GM12878 (cell line): ENCODE measurements at regions of chr1 and their contacts with region 1.

Region 1: DNA sequence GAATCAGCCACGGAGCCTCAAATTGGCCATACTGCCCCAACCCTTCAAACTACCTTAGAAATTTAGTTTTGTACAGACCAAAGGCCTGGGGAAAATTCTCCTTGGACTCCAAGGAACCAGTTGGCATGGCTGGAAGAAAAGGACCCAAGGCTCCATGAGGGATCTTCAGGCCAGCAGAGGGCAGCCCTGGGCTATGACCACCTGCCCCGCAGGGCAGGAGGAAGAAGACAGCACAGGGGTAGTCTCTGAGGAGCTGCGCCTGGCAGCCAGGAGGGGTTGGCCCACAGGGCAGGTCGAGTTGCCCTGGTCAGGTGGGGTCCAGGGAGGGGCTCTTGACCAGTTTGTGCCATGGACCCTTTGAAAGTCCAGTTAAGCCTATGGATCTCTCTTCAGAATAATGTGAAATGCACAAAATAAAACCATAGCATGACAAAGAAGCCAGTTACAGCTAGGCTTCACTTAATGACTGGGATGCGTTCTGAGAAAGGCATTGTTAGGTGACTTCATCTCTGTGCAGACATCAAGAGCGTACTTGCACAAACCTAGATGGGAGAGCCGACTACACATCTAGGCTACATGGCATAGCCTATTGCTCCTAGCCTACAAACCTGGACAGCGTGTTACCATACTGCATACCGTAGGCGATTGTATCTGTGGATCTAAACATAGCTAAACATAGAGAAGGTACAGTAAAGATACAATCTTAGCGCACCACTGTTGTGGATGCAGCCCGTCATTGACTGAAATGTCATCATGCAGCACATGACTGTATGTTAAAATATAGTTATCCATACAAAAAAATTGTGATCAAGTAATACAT is 26.1 kb downstream of the CACNA1S start:
- DNase-seq: no peak
- ATAC-seq: peak; percentile 96
- H3K4me3 ChIP-seq: no peak overlapping the region
- H3K27ac ChIP-seq: no peak overlapping the region
- H3K4me1 ChIP-seq: no peaks in the 10 kb centered on the region
- H3K27me3 ChIP-seq: peaks cover 0 to 2% of the 10 kb centered on the region in 2 experiments; a peak in 2 of 4 replicates
- CTCF ChIP-seq: peak; percentile 38 to 68 (median 62); a peak in 5 of 6 replicates
- EP300 ChIP-seq: no peak
- POLR2A ChIP-seq: no peak
- RAD21 ChIP-seq: peak; percentile 62

Region 2: GRCh38 chr1:201114236-201115131 is 28.4 kb after region 1 on chr1:
- CTCF ChIA-PET with region 1: interaction called, 16 read pairs
- POLR2A ChIA-PET with region 1: no interaction called
- RAD21 ChIA-PET with region 1: interaction called, 9 read pairs
- SMC1A ChIA-PET with region 1: interaction called, 3 read pairs
- in situ Hi-C with region 1: no loop called
- intact Hi-C with region 1: loop called (anchors 1 kb)
- DNase-seq: peak; percentile 17
- ATAC-seq: peak; percentile 97
- H3K4me3 ChIP-seq: peak overlapping the region; percentile 47
- H3K27ac ChIP-seq: no peak overlapping the region
- H3K4me1 ChIP-seq: no peaks in the 10 kb centered on the region
- H3K27me3 ChIP-seq: peaks cover 3 to 8% of the 10 kb centered on the region in 2 experiments; a peak in 3 of 4 replicates
- CTCF ChIP-seq: peak; percentile 79 to 89 (median 85)
- EP300 ChIP-seq: no peak
- POLR2A ChIP-seq: no peak
- RAD21 ChIP-seq: peak; percentile 84

Region 3: GRCh38 chr1:201229771-201230635 is 143.9 kb after region 1 on chr1:
- CTCF ChIA-PET with region 1: no interaction called
- POLR2A ChIA-PET with region 1: no interaction called
- RAD21 ChIA-PET with region 1: no interaction called
- SMC1A ChIA-PET with region 1: no interaction called
- in situ Hi-C with region 1: no loop called
- intact Hi-C with region 1: loop called (anchors 10 kb)
- DNase-seq: no peak
- ATAC-seq: no peak
- H3K4me3 ChIP-seq: no peak overlapping the region
- H3K27ac ChIP-seq: no peak overlapping the region
- H3K4me1 ChIP-seq: no peaks in the 10 kb centered on the region
- H3K27me3 ChIP-seq: peaks cover 0 to 4% of the 10 kb centered on the region in 2 experiments; a peak in 2 of 4 replicates
- CTCF ChIP-seq: no peak
- EP300 ChIP-seq: no peak
- POLR2A ChIP-seq: no peak
- RAD21 ChIP-seq: no peak

Region 4: GRCh38 chr1:201361652-201362504 is 275.8 kb after region 1 on chr1:
- CTCF ChIA-PET with region 1: no interaction called
- POLR2A ChIA-PET with region 1: no interaction called
- RAD21 ChIA-PET with region 1: no interaction called
- SMC1A ChIA-PET with region 1: no interaction called
- in situ Hi-C with region 1: no loop called
- intact Hi-C with region 1: loop called (anchors 10 kb)
- DNase-seq: no peak
- ATAC-seq: peak; percentile 92
- H3K4me3 ChIP-seq: no peak overlapping the region
- H3K27ac ChIP-seq: no peak overlapping the region
- H3K4me1 ChIP-seq: no peaks in the 10 kb centered on the region
- H3K27me3 ChIP-seq: peaks cover 3 to 4% of the 10 kb centered on the region in 2 experiments
- CTCF ChIP-seq: peak; percentile 71 to 85 (median 80)
- EP300 ChIP-seq: no peak
- POLR2A ChIP-seq: no peak
- RAD21 ChIP-seq: peak; percentile 71